ENCODE measurements at regions of chr1 and their contacts with region 1.

Region 1: GRCh38 chr1:6523566-6523965 is 30.7 kb downstream of the NOL9 start:
- DNase-seq: peak; percentile 60
- ATAC-seq: peak; percentile 67
- H3K4me3 Mint-ChIP-seq: no peak overlapping the region
- H3K27ac Mint-ChIP-seq: peak overlapping the region; percentile 67
- H3K4me1 Mint-ChIP-seq: peaks cover 30% of the 10 kb centered on the region
- H3K27me3 Mint-ChIP-seq: no peaks in the 10 kb centered on the region
- CTCF ChIP-seq: peak; percentile 41

Region 2: DNA sequence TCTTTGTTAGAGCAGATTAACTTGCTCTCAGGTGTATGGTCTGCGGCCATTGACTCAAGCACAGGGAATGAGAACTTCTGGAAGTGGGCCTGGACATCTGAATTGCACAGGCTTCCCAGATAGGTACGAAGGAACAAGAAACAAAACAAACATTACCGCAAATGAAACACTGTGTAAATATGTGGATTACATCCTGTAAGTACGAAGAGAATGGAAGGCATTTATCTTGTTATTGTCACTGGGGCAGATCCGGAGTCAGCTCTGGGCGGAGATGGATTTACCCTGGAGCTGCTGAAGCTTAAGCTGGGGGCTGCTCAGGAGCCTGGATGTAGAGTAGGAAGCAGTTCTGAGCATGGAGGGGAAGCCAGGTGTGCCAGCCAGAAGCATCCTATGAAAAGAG is 110.7 kb before region 1 on chr1:
- CTCF ChIA-PET with region 1: no interaction called
- POLR2A ChIA-PET with region 1: no interaction called
- DNase-seq: no peak
- ATAC-seq: no peak
- H3K4me3 Mint-ChIP-seq: no peak overlapping the region
- H3K27ac Mint-ChIP-seq: no peak overlapping the region
- H3K4me1 Mint-ChIP-seq: peaks cover 20% of the 10 kb centered on the region
- H3K27me3 Mint-ChIP-seq: peaks cover 63% of the 10 kb centered on the region
- CTCF ChIP-seq: no peak

Region 3: GRCh38 chr1:6475381-6476133 is 48.0 kb before region 1 on chr1:
- CTCF ChIA-PET with region 1: interaction called, 10 read pairs
- POLR2A ChIA-PET with region 1: no interaction called
- DNase-seq: peak; percentile 80
- ATAC-seq: peak; percentile 34
- H3K4me3 Mint-ChIP-seq: no peak overlapping the region
- H3K27ac Mint-ChIP-seq: no peak overlapping the region
- H3K4me1 Mint-ChIP-seq: peaks cover 34% of the 10 kb centered on the region
- H3K27me3 Mint-ChIP-seq: no peaks in the 10 kb centered on the region
- CTCF ChIP-seq: peak; percentile 97

Region 4: DNA sequence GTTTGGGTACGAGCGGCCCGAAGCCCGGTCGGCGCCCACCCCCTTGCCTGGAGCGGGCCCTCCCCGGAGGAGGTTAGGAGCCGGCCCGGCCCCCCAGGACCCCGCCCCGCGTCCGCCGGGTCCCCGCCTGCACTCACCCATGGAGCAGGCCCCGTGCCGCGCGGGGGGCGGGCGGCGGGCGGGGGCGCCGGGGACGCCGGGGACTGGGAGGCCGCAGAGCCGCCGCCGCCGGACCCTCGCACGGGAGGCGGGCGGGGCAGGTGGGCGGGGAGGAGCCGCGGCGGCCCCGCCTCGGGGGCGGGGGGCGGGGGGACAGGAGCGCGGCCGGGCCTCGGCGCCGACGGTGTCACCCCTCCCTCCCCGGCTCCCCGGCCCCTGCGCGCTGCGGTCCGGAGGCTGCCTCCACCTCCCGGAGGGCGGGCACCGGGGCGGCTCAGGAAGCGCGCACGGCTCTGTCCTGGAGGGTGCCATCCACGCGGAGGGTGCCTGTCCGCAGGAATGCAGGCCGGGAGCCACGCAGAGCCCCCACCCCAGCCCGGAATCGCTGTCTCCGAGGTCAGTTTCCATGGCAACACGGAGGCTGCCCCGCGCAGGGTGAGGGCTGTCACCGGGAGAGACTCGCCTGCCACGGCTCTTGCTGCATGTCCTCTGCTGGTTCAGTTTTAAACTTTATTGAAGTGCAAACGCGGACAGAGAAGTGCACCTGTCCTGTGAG is 26.2 kb before region 1 on chr1:
- CTCF ChIA-PET with region 1: interaction called, 179 read pairs
- POLR2A ChIA-PET with region 1: interaction called, 4 read pairs
- DNase-seq: peak; percentile 68
- ATAC-seq: peak; percentile 59
- H3K4me3 Mint-ChIP-seq: peak overlapping the region; percentile 73
- H3K27ac Mint-ChIP-seq: no peak overlapping the region
- H3K4me1 Mint-ChIP-seq: peaks cover 23% of the 10 kb centered on the region
- H3K27me3 Mint-ChIP-seq: peaks cover 30% of the 10 kb centered on the region
- CTCF ChIP-seq: no peak

Region 5: DNA sequence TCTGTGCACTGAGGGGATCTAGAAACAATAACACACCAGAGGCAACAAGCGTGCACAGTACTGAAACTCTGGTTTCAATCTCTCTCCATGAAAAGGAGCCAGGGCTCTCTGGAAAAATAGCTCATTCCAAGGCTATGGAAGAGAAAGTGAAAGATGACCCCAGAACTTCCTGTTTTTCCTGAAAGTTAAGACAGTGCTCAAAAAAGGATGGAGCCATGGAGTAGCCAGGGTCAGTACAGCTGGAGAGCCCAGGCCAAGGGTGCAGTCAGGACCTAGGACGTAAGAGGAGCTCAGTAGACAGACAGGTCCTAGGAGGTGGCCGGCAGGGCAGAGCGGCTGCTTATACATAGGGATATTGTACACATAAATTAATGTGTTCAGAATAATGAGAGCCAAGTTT is 11.6 kb after region 1 on chr1:
- CTCF ChIA-PET with region 1: interaction called, 26 read pairs
- POLR2A ChIA-PET with region 1: no interaction called
- DNase-seq: no peak
- ATAC-seq: no peak
- H3K4me3 Mint-ChIP-seq: no peak overlapping the region
- H3K27ac Mint-ChIP-seq: no peak overlapping the region
- H3K4me1 Mint-ChIP-seq: no peaks in the 10 kb centered on the region
- H3K27me3 Mint-ChIP-seq: no peaks in the 10 kb centered on the region
- CTCF ChIP-seq: no peak

Region 6: GRCh38 chr1:6646499-6647148 is 123.1 kb after region 1 on chr1:
- CTCF ChIA-PET with region 1: interaction called, 10 read pairs
- POLR2A ChIA-PET with region 1: no interaction called
- DNase-seq: peak; percentile 27
- ATAC-seq: peak; percentile 76
- H3K4me3 Mint-ChIP-seq: no peak overlapping the region
- H3K27ac Mint-ChIP-seq: peak overlapping the region; percentile 71
- H3K4me1 Mint-ChIP-seq: peaks cover 16% of the 10 kb centered on the region
- H3K27me3 Mint-ChIP-seq: no peaks in the 10 kb centered on the region
- CTCF ChIP-seq: peak; percentile 60